AG04449 (cell line): ENCODE measurements at regions of chr16 and their contacts with region 1.

Region 1: DNA sequence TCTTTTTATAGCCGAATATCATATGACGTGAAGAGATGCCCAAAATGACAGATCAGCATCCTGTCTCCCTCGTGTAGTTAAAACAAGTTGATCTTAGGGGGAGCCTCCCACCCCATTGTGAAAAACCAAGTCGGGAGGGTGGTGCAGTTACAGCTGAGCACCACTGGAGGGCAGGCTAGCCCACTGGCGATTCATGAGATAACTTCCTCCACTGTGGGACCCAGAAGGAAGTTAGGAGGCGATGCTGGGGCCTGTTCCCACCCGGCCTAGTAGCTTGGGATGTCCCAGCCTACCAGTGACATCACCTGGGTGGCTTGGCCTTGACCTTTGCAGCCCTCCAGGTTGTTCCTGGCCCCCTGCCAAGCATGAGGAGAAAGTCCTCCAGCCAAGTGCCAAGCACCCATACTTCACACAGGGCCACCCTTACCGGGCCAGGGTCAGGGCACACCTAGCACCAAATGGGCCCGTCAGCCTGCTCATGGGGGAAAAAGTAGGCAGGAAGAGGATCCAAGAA is 8.1 kb upstream of the CPNE2 start:
- DNase-seq: no peak
- H3K4me3 ChIP-seq: no peak overlapping the region
- CTCF ChIP-seq: peak; percentile 99

Region 2: DNA sequence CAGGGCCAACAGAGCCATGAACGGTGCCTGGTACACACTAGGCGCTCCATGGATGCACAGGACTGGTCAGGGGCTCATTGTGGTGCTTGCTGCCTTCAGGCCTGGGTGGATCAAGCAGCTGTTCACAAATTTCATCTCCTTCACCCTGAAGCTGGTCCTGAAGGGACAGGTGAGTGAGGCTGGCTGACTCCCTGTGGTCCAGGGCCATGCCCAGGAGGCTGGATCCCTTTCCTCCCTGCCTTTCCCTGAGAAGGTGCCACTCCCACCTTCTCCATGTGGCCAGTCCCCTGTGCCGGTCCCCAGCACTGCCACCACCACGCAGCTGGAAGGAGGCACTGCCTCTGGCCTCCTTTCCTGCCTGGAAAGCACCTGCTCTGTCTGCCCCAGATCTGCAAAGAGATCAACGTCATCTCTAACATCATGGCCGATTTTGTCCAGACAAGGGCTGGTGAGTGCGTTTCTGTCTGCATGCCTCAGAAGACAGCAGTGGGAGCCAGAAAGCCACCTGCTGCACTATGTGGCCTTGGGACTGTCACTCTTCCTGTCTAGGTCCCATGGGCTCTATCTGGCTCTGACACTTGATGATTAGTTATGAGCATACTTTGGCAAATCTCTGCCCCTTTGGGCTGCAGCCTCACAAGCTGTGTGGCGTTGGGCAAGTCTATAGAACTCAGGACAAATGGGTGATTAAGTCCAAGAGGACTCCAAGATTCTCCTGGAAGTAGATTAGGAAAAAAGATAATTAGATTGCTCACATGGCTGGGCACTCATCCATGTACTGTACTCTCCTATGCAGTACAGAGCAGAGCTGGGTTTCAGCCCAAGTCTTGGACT is 113.2 kb before region 1 on chr16:
- CTCF ChIA-PET with region 1: no interaction called
- POLR2A ChIA-PET with region 1: no interaction called
- DNase-seq: no peak
- H3K4me3 ChIP-seq: no peak overlapping the region
- CTCF ChIP-seq: no peak

Region 3: DNA sequence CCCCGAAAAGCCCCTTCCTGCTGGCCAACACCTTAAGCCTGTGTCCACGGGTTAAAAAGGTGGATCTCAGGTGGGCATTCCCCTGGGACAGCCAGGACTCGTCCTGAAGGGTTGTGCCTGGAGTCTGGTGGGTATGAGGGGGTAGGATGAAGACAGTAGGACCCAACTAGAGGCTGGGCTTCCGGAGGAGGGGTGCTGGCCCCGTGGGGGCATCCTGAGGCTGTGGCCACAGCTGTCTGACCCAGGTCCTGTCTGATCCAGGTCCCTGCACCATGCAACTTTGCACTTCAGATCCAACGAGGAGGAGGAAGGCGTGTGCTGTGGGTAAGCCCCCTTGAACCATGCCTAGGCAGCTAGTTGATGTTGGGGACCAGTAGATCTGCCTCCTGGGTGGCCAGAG is 29.5 kb before region 1 on chr16:
- CTCF ChIA-PET with region 1: interaction called, 13 read pairs
- POLR2A ChIA-PET with region 1: no interaction called
- DNase-seq: no peak
- H3K4me3 ChIP-seq: no peak overlapping the region
- CTCF ChIP-seq: no peak

Region 4: GRCh38 chr16:57066625-57067024 is 17.7 kb before region 1 on chr16:
- CTCF ChIA-PET with region 1: interaction called, 60 read pairs
- POLR2A ChIA-PET with region 1: no interaction called
- DNase-seq: no peak
- H3K4me3 ChIP-seq: no peak overlapping the region
- CTCF ChIP-seq: no peak

Region 5: GRCh38 chr16:57115514-57116182 is 31.3 kb after region 1 on chr16:
- CTCF ChIA-PET with region 1: interaction called, 10 read pairs
- POLR2A ChIA-PET with region 1: no interaction called
- DNase-seq: no peak
- H3K4me3 ChIP-seq: no peak overlapping the region
- CTCF ChIP-seq: no peak

Region 6: DNA sequence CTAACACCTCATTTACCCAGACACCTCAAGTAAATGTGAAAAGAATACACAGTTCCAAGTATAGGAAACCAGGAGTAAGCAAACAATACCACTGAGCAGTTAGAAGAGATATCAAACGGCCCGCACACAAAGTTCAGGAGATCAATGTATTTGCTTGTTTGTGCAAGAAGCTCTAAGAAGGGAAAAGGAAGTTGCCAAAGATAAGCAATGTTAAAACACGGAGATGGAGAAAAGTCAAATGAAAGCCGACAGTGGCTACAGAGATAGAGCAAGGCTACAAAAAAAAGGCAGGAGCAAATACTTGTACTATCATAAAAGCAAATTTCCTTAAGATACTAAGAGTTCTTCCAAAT is 72.0 kb after region 1 on chr16:
- CTCF ChIA-PET with region 1: interaction called, 25 read pairs
- POLR2A ChIA-PET with region 1: no interaction called
- DNase-seq: no peak
- H3K4me3 ChIP-seq: no peak overlapping the region
- CTCF ChIP-seq: no peak

Region 7: GRCh38 chr16:57185944-57186871 is 101.9 kb after region 1 on chr16 and contains the starts of genes PSME3IP1 and RSPRY1:
- CTCF ChIA-PET with region 1: interaction called, 43 read pairs
- POLR2A ChIA-PET with region 1: no interaction called
- DNase-seq: peak; percentile 96
- H3K4me3 ChIP-seq: peak within 1 kb of the TSS; percentile 98
- CTCF ChIP-seq: no peak

Region 8: GRCh38 chr16:57413301-57413730 is 329.0 kb after region 1 on chr16:
- CTCF ChIA-PET with region 1: interaction called, 22 read pairs
- POLR2A ChIA-PET with region 1: no interaction called
- DNase-seq: no peak
- H3K4me3 ChIP-seq: no peak overlapping the region
- CTCF ChIP-seq: no peak